Heart right ventricle (tissue), 16 donors: ENCODE measurements at regions of chr14 and their contacts with region 1.

Region 1: GRCh38 chr14:73058224-73058921 is at the start of gene RBM25:
- DNase-seq: peak; percentile 93 to 96
- ATAC-seq: peak; percentile 99 to 100 (median 99)
- H3K4me3 ChIP-seq: peak within 1 kb of the TSS; percentile 67 to 91 (median 80)
- H3K27ac ChIP-seq: peak within 1 kb of the TSS; percentile 71 to 95 (median 92)
- H3K4me1 ChIP-seq: peaks cover 5 to 47% (median 42%) of the 10 kb centered on the region in 9 donors
- H3K27me3 ChIP-seq: no peaks in the 10 kb centered on the region
- CTCF ChIP-seq: peak in 5 of 9 donors; percentile 6 to 36 (median 11)
- total RNA-seq, gene RBM25: 35.1 to 43.3 (median 39.9) TPM

Region 2: GRCh38 chr14:72920015-72920414 is 138.4 kb before region 1 on chr14:
- intact Hi-C with region 1: no loop called
- DNase-seq: no peak
- ATAC-seq: no peak
- H3K4me3 ChIP-seq: no peak overlapping the region
- H3K27ac ChIP-seq: no peak overlapping the region
- H3K4me1 ChIP-seq: peaks cover 0 to 6% (median 0%) of the 10 kb centered on the region in 9 donors
- H3K27me3 ChIP-seq: peaks cover 0 to 23% (median 0%) of the 10 kb centered on the region in 7 donors
- CTCF ChIP-seq: no peak

Region 3: GRCh38 chr14:73014105-73014504 is 44.3 kb before region 1 on chr14:
- intact Hi-C with region 1: no loop called
- DNase-seq: no peak
- ATAC-seq: no peak
- H3K4me3 ChIP-seq: no peak overlapping the region
- H3K27ac ChIP-seq: no peak overlapping the region
- H3K4me1 ChIP-seq: peaks cover 0 to 16% (median 5%) of the 10 kb centered on the region in 9 donors
- H3K27me3 ChIP-seq: no peaks in the 10 kb centered on the region
- CTCF ChIP-seq: no peak

Region 4: GRCh38 chr14:73026845-73027542 is 31.4 kb before region 1 on chr14 and contains the start of gene ZFYVE1:
- intact Hi-C with region 1: loop called in 3 of 10 experiments (anchors 1 to 2 kb)
- DNase-seq: peak; percentile 95 to 97
- ATAC-seq: peak; percentile 99 to 100 (median 100)
- H3K4me3 ChIP-seq: peak within 1 kb of the TSS; percentile 34 to 89 (median 76)
- H3K27ac ChIP-seq: peak within 1 kb of the TSS; percentile 38 to 88 (median 83)
- H3K4me1 ChIP-seq: peaks cover 4 to 40% (median 27%) of the 10 kb centered on the region in 9 donors
- H3K27me3 ChIP-seq: no peaks in the 10 kb centered on the region
- CTCF ChIP-seq: peak in 1 of 9 donors; percentile 10
- total RNA-seq, gene ZFYVE1: 10.8 to 19.5 (median 14.5) TPM

Region 5: DNA sequence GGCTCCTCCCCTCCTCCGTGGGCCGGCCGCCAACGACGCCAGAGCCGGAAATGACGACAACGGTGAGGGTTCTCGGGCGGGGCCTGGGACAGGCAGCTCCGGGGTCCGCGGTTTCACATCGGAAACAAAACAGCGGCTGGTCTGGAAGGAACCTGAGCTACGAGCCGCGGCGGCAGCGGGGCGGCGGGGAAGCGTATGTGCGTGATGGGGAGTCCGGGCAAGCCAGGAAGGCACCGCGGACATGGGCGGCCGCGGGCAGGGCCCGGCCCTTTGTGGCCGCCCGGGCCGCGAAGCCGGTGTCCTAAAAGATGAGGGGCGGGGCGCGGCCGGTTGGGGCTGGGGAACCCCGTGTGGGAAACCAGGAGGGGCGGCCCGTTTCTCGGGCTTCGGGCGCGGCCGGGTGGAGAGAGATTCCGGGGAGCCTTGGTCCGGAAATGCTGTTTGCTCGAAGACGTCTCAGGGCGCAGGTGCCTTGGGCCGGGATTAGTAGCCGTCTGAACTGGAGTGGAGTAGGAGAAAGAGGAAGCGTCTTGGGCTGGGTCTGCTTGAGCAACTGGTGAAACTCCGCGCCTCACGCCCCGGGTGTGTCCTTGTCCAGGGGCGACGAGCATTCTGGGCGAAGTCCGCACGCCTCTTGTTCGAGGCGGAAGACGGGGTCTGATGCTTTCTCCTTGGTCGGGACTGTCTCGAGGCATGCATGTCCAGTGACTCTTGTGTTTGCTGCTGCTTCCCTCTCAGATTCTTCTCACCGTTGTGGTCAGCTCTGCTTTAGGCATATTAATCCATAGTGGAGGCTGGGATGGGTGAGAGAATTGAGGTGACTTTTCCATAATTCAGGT is 78.2 kb after region 1 on chr14 and contains the start of gene PSEN1:
- intact Hi-C with region 1: no loop called
- DNase-seq: peak; percentile 95 to 96
- ATAC-seq: peak; percentile 98 to 100 (median 98)
- H3K4me3 ChIP-seq: peak within 1 kb of the TSS; percentile 73 to 98 (median 93)
- H3K27ac ChIP-seq: peak within 1 kb of the TSS; percentile 86 to 97 (median 93)
- H3K4me1 ChIP-seq: peaks cover 0 to 36% (median 19%) of the 10 kb centered on the region in 9 donors
- H3K27me3 ChIP-seq: no peaks in the 10 kb centered on the region
- CTCF ChIP-seq: no peak
- total RNA-seq, gene PSEN1: 19.9 to 33.7 (median 24.9) TPM

Region 6: DNA sequence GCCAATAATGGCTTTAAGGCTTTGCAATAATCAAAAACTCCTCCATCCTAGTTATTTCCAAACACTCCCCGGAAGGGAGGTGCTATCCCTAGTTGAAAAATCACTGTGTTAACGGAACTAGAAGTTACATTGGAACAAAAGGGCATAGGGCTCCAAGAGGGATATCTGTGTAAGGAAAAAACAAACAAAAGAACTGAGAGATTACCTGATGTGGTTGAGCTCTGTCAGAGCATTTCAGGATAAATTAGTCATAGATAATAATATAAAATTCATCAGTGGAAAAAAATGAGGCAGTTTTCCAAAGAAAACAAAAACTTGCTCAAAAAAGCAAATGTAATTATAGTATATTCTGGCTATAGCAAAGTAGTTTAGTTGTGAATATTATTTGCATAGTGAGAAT is 151.6 kb after region 1 on chr14:
- intact Hi-C with region 1: no loop called
- DNase-seq: no peak
- ATAC-seq: no peak
- H3K4me3 ChIP-seq: no peak overlapping the region
- H3K27ac ChIP-seq: no peak overlapping the region
- H3K4me1 ChIP-seq: peaks cover 0 to 2% (median 0%) of the 10 kb centered on the region in 9 donors
- H3K27me3 ChIP-seq: no peaks in the 10 kb centered on the region
- CTCF ChIP-seq: no peak